Activated T-helper 1 cell treated with anti-CD3 and anti-CD28 coated beads, Interleukin-12 subunit alpha, Interleukin-12 subunit beta, Interleukin-2, Interleukin-4 antibody, amounts not matched to agents 30 ng/mL and 10 ng/mL and 1 ng/mL, durations not matched to agents 14 hours and 24 hours and 36 hours (primary cell): ENCODE measurements at regions of chr18 and their contacts with region 1.

Region 1: DNA sequence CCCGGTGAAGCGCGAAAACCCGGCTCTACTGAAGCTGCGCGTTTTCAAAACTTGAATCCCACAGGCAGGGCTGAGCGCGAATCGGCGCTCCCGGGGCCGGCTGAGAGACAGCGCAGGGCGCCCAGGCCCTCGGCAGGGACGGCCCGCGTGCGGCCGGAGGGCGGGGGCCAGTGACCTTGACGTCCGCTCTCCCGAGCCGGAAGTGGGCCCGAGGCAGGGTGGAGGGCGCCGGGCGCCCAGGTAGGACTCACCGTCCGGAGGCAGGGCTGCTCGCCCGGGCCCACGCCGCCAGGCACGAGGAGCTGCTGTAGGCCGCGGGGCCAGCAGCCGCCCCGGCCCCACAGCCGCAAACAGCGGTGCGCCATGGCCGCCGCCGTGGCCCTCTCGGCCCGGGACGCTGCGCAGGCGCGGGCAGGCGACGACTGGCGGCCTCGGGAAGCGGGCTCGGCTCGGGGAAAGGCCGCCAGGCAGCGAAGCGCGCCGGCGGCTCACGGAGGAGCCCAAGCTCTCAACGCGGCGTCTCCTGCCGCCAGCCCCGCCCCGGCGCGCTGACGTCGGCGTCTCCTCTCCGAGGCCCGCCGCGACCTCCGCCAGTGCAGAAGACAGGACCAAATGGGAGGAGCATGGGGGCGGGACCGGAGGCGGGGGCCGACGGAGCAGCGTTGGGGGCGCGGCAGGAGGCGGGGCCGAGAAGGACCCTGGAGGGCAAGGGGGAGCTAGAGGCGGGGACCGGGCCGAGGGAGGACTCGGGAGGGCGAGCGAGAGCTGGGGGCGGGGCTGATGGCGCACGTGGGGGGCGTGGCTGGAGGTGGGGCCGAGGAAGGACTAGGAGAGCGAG is at the start of gene AFG3L2:
- DNase-seq: peak; percentile 100
- H3K4me3 Mint-ChIP-seq: peak within 1 kb of the TSS; percentile 92
- H3K27ac Mint-ChIP-seq: peak within 1 kb of the TSS; percentile 92
- H3K4me1 Mint-ChIP-seq: peaks cover 36% of the 10 kb centered on the region
- H3K27me3 Mint-ChIP-seq: peaks cover 18% of the 10 kb centered on the region
- total RNA-seq, gene AFG3L2: 66.8 and 70.6 TPM in 2 replicates

Region 2: GRCh38 chr18:11980555-11981382 is 396.2 kb before region 1 on chr18:
- intact Hi-C with region 1: loop called (anchors 1 kb)
- DNase-seq: peak; percentile 96
- H3K4me3 Mint-ChIP-seq: peak overlapping the region; percentile 80
- H3K27ac Mint-ChIP-seq: peak overlapping the region; percentile 83
- H3K4me1 Mint-ChIP-seq: peaks cover 15% of the 10 kb centered on the region
- H3K27me3 Mint-ChIP-seq: peaks cover 12% of the 10 kb centered on the region

Region 3: DNA sequence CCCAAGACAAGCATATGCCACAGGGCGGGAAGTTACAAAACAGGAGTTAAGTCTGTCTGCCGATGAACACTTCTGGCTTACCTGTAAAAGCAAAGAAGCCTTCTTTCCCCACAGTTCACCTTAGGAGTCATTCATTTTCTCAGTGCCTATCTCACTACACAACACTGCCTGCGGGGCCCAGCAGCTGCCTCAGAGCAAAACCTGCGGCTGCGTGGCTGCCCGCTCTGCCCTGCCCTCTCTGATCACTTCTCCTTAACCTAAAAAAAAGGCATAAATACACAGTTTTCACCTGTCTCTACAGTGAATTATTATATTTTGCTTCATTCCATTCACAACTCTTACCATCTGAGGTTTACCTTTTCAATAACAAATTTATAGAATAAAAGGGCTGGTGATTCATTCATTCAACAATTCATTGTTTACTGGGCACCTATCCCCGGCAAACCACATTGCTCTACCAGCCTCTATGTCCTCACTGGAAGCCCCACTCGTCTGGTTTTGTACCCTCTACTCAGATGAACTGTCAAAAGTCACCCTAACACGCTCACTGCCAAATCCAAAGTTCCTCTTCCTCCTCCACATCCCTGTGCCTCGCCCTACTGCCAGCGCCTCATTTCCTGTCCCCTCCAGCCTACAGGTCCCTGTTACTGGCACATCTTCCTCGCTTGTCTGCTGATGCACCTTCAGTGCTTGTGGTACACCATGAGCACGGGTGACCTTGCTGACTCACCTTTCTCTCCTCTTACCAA is 31.3 kb before region 1 on chr18:
- intact Hi-C with region 1: no loop called
- DNase-seq: no peak
- H3K4me3 Mint-ChIP-seq: no peak overlapping the region
- H3K27ac Mint-ChIP-seq: no peak overlapping the region
- H3K4me1 Mint-ChIP-seq: no peaks in the 10 kb centered on the region
- H3K27me3 Mint-ChIP-seq: no peaks in the 10 kb centered on the region

Region 4: DNA sequence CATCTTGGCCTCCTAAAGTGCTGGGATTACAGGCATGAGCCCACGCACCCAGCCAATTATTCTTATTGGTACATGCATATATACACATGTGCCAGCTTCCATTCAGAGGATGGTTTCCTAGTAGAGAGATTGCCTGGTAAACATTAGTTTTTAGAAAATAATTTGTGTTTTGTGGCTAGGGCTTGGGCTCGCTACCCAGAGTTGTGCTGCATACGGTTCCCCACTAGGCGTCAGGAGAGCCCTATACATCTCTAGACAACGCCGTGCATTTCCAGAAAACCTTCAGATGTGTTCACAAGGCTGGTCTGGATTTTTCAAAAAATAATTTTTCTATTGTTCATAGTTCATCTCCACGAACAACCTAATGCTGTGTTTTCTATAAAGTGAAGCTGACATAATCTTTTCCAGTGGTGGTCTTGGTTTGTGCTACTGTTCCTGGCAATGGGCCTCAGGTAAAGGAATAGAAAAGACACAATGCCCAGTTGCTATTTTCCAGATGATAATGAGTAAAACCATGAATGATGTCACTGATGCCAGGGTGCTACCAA is 14.8 kb after region 1 on chr18:
- intact Hi-C with region 1: no loop called
- DNase-seq: peak; percentile 26
- H3K4me3 Mint-ChIP-seq: no peak overlapping the region
- H3K27ac Mint-ChIP-seq: no peak overlapping the region
- H3K4me1 Mint-ChIP-seq: peaks cover 5% of the 10 kb centered on the region
- H3K27me3 Mint-ChIP-seq: peaks cover 4% of the 10 kb centered on the region

Region 5: DNA sequence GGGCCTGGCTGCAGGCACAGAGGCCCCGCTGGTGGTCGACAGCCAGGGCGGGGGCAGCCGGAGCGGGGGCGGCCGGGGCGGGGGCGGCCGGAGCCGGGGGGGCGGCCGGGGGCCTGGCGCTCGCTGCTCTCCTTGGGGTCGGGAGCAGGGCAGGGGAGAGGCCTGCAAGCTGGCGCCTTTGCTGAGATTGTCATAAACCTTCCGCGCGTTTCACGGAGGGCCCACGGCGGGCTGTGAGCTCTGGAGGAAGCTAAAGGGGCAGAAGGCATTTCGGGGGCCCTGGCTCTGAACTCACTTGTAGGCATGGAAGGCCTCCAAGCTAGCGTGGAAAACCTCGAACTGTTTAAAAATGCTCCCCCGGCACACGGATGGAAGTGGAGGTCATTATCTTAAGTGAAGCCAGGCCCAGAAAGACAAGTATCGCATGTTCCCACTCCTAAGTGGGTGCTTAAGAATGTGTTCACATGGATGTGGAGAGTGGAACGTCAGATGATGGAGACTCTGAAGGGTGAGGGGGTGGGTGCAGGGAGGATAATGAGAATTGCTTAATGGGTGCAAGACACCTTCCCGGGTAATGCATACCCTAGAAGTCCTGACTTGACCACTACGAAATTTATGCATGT is 31.4 kb after region 1 on chr18:
- intact Hi-C with region 1: loop called (anchors 1 kb)
- DNase-seq: no peak
- H3K4me3 Mint-ChIP-seq: peak overlapping the region; percentile 76
- H3K27ac Mint-ChIP-seq: no peak overlapping the region
- H3K4me1 Mint-ChIP-seq: peaks cover 27% of the 10 kb centered on the region
- H3K27me3 Mint-ChIP-seq: peaks cover 47% of the 10 kb centered on the region

Region 6: DNA sequence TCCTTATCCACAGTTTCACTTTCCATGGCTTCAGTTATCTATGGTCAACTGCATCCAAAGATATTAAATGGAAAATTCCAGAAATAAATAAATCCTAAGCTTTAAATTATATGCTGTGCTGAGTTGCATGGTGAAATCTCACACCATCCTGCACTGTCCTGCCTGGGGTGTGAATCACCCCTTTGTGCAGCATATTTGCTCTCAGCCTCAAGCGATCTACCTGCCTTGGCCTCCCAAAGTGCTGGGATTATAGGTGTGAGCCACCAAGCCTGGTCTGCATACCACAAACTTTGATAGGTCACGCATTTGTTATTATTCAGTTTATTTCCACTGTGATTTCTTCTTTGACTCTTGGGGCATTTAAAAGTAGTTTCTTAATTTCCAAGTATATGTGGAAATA is 163.8 kb after region 1 on chr18:
- intact Hi-C with region 1: no loop called
- DNase-seq: no peak
- H3K4me3 Mint-ChIP-seq: no peak overlapping the region
- H3K27ac Mint-ChIP-seq: no peak overlapping the region
- H3K4me1 Mint-ChIP-seq: peaks cover 9% of the 10 kb centered on the region
- H3K27me3 Mint-ChIP-seq: peaks cover 5% of the 10 kb centered on the region

Region 7: GRCh38 chr18:12702221-12703095 is 325.5 kb after region 1 on chr18 and contains the starts of genes CEP76 and PSMG2:
- intact Hi-C with region 1: loop called (anchors 1 kb)
- DNase-seq: peak; percentile 80
- H3K4me3 Mint-ChIP-seq: peak within 1 kb of the TSS; percentile 97
- H3K27ac Mint-ChIP-seq: peak within 1 kb of the TSS; percentile 92
- H3K4me1 Mint-ChIP-seq: peaks cover 54% of the 10 kb centered on the region
- H3K27me3 Mint-ChIP-seq: no peaks in the 10 kb centered on the region
- total RNA-seq, gene CEP76: 16.1 and 17.5 TPM in 2 replicates
- total RNA-seq, gene PSMG2: 113 and 118 TPM in 2 replicates

Region 8: GRCh38 chr18:12947355-12948041 is 570.6 kb after region 1 on chr18 and contains the start of gene SEH1L:
- intact Hi-C with region 1: loop called (anchors 1 kb)
- DNase-seq: peak; percentile 96
- H3K4me3 Mint-ChIP-seq: peak within 1 kb of the TSS; percentile 98
- H3K27ac Mint-ChIP-seq: peak within 1 kb of the TSS; percentile 98
- H3K4me1 Mint-ChIP-seq: peaks cover 44% of the 10 kb centered on the region
- H3K27me3 Mint-ChIP-seq: peaks cover 2% of the 10 kb centered on the region
- total RNA-seq, gene SEH1L: 121 and 124 TPM in 2 replicates